H1 (cell line): ENCODE measurements at regions of chr15 and their contacts with region 1.

Region 1: GRCh38 chr15:56491110-56491722 is 26.3 kb upstream of the MNS1 start:
- DNase-seq: peak; percentile 68 to 77
- H3K4me3 ChIP-seq: no peak overlapping the region
- H3K27ac ChIP-seq: no peak overlapping the region
- H3K4me1 ChIP-seq: no peaks in the 10 kb centered on the region
- H3K27me3 ChIP-seq: no peaks in the 10 kb centered on the region
- CTCF ChIP-seq: peak; percentile 77 to 90 (median 86)
- EP300 ChIP-seq: no peak
- POLR2A ChIP-seq: no peak
- RAD21 ChIP-seq: peak; percentile 90 to 94

Region 2: GRCh38 chr15:56582785-56583184 is 91.6 kb after region 1 on chr15:
- CTCF ChIA-PET with region 1: no interaction called
- POLR2A ChIA-PET with region 1: no interaction called
- DNase-seq: no peak
- H3K4me3 ChIP-seq: no peak overlapping the region
- H3K27ac ChIP-seq: no peak overlapping the region
- H3K4me1 ChIP-seq: no peaks in the 10 kb centered on the region
- H3K27me3 ChIP-seq: no peaks in the 10 kb centered on the region
- CTCF ChIP-seq: no peak
- EP300 ChIP-seq: no peak
- POLR2A ChIP-seq: no peak
- RAD21 ChIP-seq: no peak

Region 3: GRCh38 chr15:56813995-56814394 is 322.8 kb after region 1 on chr15:
- CTCF ChIA-PET with region 1: interaction called, 10 read pairs
- POLR2A ChIA-PET with region 1: no interaction called
- DNase-seq: no peak
- H3K4me3 ChIP-seq: no peak overlapping the region
- H3K27ac ChIP-seq: no peak overlapping the region
- H3K4me1 ChIP-seq: no peaks in the 10 kb centered on the region
- H3K27me3 ChIP-seq: no peaks in the 10 kb centered on the region
- CTCF ChIP-seq: no peak
- EP300 ChIP-seq: no peak
- POLR2A ChIP-seq: no peak
- RAD21 ChIP-seq: no peak

Region 4: GRCh38 chr15:56821721-56822425 is 330.7 kb after region 1 on chr15:
- CTCF ChIA-PET with region 1: interaction called, 12 read pairs
- POLR2A ChIA-PET with region 1: no interaction called
- DNase-seq: peak in 1 of 2 experiments; percentile 59
- H3K4me3 ChIP-seq: no peak overlapping the region
- H3K27ac ChIP-seq: no peak overlapping the region
- H3K4me1 ChIP-seq: no peaks in the 10 kb centered on the region
- H3K27me3 ChIP-seq: no peaks in the 10 kb centered on the region
- CTCF ChIP-seq: peak; percentile 59 to 79 (median 66)
- EP300 ChIP-seq: no peak
- POLR2A ChIP-seq: no peak
- RAD21 ChIP-seq: peak; percentile 80 to 87

Region 5: DNA sequence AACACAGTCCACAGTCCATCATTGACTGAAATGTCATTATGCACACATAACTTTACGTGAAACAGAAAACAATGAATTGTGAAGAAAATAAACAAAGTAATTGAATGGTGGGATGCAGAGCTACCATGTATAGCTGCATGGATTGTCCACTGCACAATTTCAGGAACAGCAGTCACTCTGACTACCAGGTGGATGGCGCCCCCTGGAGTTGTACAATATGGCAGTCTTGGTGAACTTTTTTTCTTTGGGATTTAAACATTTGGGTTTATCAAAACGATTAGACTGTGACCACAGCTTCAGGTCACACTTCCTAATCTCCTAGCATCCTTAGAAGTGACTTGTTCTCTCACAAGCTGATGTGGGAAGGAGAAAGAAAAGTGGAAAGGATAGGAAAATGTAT is 378.4 kb after region 1 on chr15:
- CTCF ChIA-PET with region 1: interaction called, 113 read pairs
- POLR2A ChIA-PET with region 1: no interaction called
- DNase-seq: peak in 1 of 2 experiments; percentile 61
- H3K4me3 ChIP-seq: no peak overlapping the region
- H3K27ac ChIP-seq: no peak overlapping the region
- H3K4me1 ChIP-seq: peaks cover 0 to 6% (median 0%) of the 10 kb centered on the region in 4 experiments; a peak in 3 of 7 replicates
- H3K27me3 ChIP-seq: no peaks in the 10 kb centered on the region
- CTCF ChIP-seq: peak; percentile 40 to 66 (median 66)
- EP300 ChIP-seq: no peak
- POLR2A ChIP-seq: no peak
- RAD21 ChIP-seq: peak; percentile 86 to 91